Mammary epithelial cell (primary cell): ENCODE measurements at regions of chr10 and their contacts with region 1.

Region 1: DNA sequence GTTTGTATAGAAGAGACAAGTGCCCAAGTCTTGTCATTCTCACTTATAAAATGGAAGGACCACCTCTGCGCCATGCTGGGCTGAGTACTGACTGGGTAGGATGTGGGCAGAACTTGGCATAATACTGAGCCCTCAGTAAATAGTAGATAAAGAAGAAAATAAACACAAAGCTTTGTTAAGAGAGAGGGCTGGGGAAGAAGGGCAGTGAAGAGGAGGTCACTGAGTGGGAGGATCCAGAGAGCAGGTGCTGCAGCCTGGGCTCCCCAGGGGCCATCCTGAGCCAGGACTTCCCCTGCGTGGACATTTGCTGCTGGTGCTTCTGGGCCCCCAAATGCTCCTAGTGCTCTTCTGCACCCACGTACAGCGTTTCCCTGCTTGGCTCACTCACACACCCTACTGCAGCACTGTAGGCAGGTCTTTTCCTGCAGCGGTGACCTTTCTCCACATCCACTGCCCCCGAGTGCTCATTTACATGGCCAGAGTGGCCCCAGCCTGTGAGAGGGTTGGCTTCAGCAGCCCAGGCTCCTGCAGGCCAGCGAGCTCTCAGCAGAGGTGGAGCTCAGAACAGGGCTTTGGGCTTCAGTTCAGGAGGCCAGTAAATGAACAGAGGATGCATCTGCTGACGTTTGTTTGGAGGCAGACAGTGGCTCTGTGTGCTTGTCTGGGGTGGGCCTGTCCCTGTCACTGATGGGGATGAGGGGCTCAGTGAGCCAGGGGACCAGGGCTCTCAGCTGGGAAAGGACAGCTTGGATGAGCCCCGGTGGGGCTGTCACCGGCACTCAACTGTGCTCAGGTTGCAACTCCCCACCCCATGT is 164.6 kb downstream of the ADARB2 start:
- DNase-seq: no peak
- H3K4me3 ChIP-seq: no peak overlapping the region
- H3K27ac ChIP-seq: no peak overlapping the region
- H3K4me1 ChIP-seq: no peaks in the 10 kb centered on the region
- H3K27me3 ChIP-seq: no peaks in the 10 kb centered on the region
- CTCF ChIP-seq: no peak

Region 2: DNA sequence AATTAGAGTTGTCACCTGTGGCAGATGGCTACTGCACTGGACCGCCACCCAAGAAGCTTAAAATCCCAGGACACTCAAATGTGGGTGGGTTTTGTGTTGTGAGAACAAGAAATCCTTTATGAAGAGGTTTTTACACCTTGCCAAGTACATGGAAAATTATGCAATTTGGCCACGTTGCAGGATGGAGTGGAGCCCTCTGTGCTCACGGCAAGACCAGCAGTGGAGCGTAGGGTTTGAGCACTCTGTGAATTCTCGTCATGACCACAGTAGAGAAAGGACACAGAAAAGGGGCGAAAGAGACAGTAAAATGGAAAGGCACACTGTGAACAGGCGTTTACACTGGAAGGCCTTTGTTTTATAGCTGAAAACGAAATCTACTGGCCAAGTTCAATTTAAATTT is 58.0 kb before region 1 on chr10:
- CTCF ChIA-PET with region 1: no interaction called
- dilution Hi-C with region 1: loop called (anchors 5 kb)
- in situ Hi-C with region 1: no loop called
- intact Hi-C with region 1: no loop called
- DNase-seq: no peak
- H3K4me3 ChIP-seq: no peak overlapping the region
- H3K27ac ChIP-seq: no peak overlapping the region
- H3K4me1 ChIP-seq: no peaks in the 10 kb centered on the region
- H3K27me3 ChIP-seq: no peaks in the 10 kb centered on the region
- CTCF ChIP-seq: no peak

Region 3: GRCh38 chr10:2300231-2300630 is 727.5 kb after region 1 on chr10:
- CTCF ChIA-PET with region 1: no interaction called
- dilution Hi-C with region 1: loop called (anchors 10 kb)
- in situ Hi-C with region 1: no loop called
- intact Hi-C with region 1: no loop called
- DNase-seq: no peak
- H3K4me3 ChIP-seq: no peak overlapping the region
- H3K27ac ChIP-seq: no peak overlapping the region
- H3K4me1 ChIP-seq: no peaks in the 10 kb centered on the region
- H3K27me3 ChIP-seq: no peaks in the 10 kb centered on the region
- CTCF ChIP-seq: no peak